Endothelial cell of umbilical vein (primary cell): ENCODE measurements at regions of chr1 and their contacts with region 1.

Region 1: GRCh38 chr1:224542783-224543440 is 73.2 kb upstream of the CNIH3 start:
- DNase-seq: peak; percentile 96
- H3K4me3 ChIP-seq: peak overlapping the region in 1 of 3 experiments; percentile 31
- H3K27ac ChIP-seq: peak overlapping the region; percentile 100
- H3K4me1 ChIP-seq: peaks cover 53% of the 10 kb centered on the region
- H3K27me3 ChIP-seq: no peaks in the 10 kb centered on the region
- CTCF ChIP-seq: no peak
- POLR2A ChIP-seq: peak; percentile 11

Region 2: GRCh38 chr1:224434691-224435317 is 108.1 kb before region 1 on chr1 and contains the start of gene WDR26:
- CTCF ChIA-PET with region 1: no interaction called
- POLR2A ChIA-PET with region 1: no interaction called
- dilution Hi-C with region 1: no loop called
- intact Hi-C with region 1: loop called (anchors 2 kb)
- DNase-seq: peak; percentile 81
- H3K4me3 ChIP-seq: peak within 1 kb of the TSS; percentile 24 to 100 (median 88)
- H3K27ac ChIP-seq: peak within 1 kb of the TSS; percentile 69
- H3K4me1 ChIP-seq: peaks cover 36% of the 10 kb centered on the region
- H3K27me3 ChIP-seq: no peaks in the 10 kb centered on the region
- CTCF ChIP-seq: peak in 1 of 2 donors; percentile 3
- POLR2A ChIP-seq: peak; percentile 88
- total RNA-seq, gene WDR26: 90.1 and 92.4 TPM in 2 replicates

Region 3: GRCh38 chr1:224503161-224504118 is 39.5 kb before region 1 on chr1:
- CTCF ChIA-PET with region 1: interaction called, 6 read pairs
- POLR2A ChIA-PET with region 1: interaction called, 3 read pairs
- dilution Hi-C with region 1: no loop called
- intact Hi-C with region 1: loop called (anchors 1 kb)
- DNase-seq: peak; percentile 93
- H3K4me3 ChIP-seq: no peak overlapping the region
- H3K27ac ChIP-seq: peak overlapping the region; percentile 23
- H3K4me1 ChIP-seq: peaks cover 28% of the 10 kb centered on the region
- H3K27me3 ChIP-seq: no peaks in the 10 kb centered on the region
- CTCF ChIP-seq: peak in 1 of 2 donors; percentile 27
- POLR2A ChIP-seq: no peak

Region 4: DNA sequence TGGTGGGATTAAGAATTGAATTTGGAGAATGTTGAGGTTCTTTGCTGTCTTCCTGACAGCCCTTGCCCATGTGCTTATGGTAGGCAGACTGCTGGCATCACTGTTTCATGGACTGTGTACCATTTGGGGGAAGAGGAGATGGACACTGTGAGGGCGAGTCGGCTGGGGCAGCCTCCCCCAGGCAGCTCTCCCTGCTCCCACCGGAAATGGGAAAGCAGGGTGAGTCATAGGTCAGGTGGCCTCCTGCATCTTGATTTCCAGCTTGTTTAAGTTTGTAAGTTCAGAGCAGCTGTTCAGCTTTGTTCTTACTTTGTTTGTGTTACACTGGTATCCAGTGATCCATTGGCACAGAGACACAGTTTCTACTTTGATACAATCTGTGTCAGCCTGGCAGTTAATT is 14.0 kb before region 1 on chr1:
- CTCF ChIA-PET with region 1: interaction called, 11 read pairs
- POLR2A ChIA-PET with region 1: interaction called, 7 read pairs
- dilution Hi-C with region 1: no loop called
- intact Hi-C with region 1: loop called (anchors 1 kb)
- DNase-seq: peak; percentile 84
- H3K4me3 ChIP-seq: no peak overlapping the region
- H3K27ac ChIP-seq: no peak overlapping the region
- H3K4me1 ChIP-seq: peaks cover 15% of the 10 kb centered on the region
- H3K27me3 ChIP-seq: no peaks in the 10 kb centered on the region
- CTCF ChIP-seq: no peak
- POLR2A ChIP-seq: no peak

Region 5: DNA sequence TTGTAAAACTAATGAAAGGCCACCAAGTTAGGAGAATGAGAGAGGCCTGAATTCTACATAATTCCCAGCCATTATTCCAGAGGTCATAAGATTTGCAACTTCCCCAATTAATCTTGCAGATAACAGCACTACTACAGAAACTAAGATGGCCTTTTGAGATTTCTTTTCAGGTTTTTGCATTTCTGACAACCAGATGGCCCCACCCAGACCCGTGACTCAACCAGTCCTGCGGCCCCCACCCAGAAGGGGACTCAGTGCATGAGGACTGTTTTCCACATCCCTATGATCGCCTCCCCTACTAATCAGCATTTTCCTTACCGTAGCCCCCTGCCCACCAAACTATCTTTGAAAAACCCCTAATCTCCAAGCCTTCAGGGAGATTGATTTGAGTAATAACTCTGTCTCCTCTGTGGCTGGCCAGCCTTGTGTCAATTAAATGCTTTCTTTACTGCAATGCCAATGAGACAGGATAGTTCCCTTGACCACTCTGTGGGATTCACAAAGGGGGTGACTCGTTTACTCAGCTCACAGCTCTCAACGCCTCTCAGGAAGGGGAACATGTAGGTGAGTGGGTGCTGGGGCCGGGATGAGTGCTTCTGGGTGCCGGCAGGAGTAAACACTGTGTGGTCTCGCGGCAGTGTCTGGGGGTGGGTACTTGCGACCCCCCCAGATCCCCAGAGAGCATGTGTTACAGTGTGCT is 62.7 kb after region 1 on chr1:
- CTCF ChIA-PET with region 1: no interaction called
- POLR2A ChIA-PET with region 1: no interaction called
- dilution Hi-C with region 1: no loop called
- intact Hi-C with region 1: no loop called
- DNase-seq: no peak
- H3K4me3 ChIP-seq: no peak overlapping the region
- H3K27ac ChIP-seq: no peak overlapping the region
- H3K4me1 ChIP-seq: no peaks in the 10 kb centered on the region
- H3K27me3 ChIP-seq: peaks cover 0 to 4% of the 10 kb centered on the region in 2 experiments
- CTCF ChIP-seq: no peak
- POLR2A ChIP-seq: no peak

Region 6: GRCh38 chr1:224851210-224851847 is 308.4 kb after region 1 on chr1:
- CTCF ChIA-PET with region 1: interaction called, 13 read pairs
- POLR2A ChIA-PET with region 1: no interaction called
- dilution Hi-C with region 1: no loop called
- intact Hi-C with region 1: no loop called
- DNase-seq: peak; percentile 50
- H3K4me3 ChIP-seq: no peak overlapping the region
- H3K27ac ChIP-seq: no peak overlapping the region
- H3K4me1 ChIP-seq: no peaks in the 10 kb centered on the region
- H3K27me3 ChIP-seq: no peaks in the 10 kb centered on the region
- CTCF ChIP-seq: peak; percentile 75 to 83
- POLR2A ChIP-seq: no peak